Caco-2 (cell line): ENCODE measurements at regions of chr1 and their contacts with region 1.

Region 1: GRCh38 chr1:220384164-220384563 is 111.9 kb upstream of the RAB3GAP2 start:
- DNase-seq: peak in 1 of 2 experiments; percentile 10
- H3K4me3 ChIP-seq: no peak overlapping the region
- H3K4me3 Mint-ChIP-seq: no peak overlapping the region
- H3K27ac Mint-ChIP-seq: no peak overlapping the region
- H3K4me1 ChIP-seq: peaks cover 5% of the 10 kb centered on the region; the same call in 1 of the 2 replicates
- H3K4me1 Mint-ChIP-seq: peaks cover 9% of the 10 kb centered on the region
- H3K27me3 ChIP-seq: 0 out of 2 replicates have a peak, but pooled peaks cover 1% of the 10 kb centered on the region
- H3K27me3 Mint-ChIP-seq: peaks cover 42% of the 10 kb centered on the region
- CTCF ChIP-seq: no peak

Region 2: DNA sequence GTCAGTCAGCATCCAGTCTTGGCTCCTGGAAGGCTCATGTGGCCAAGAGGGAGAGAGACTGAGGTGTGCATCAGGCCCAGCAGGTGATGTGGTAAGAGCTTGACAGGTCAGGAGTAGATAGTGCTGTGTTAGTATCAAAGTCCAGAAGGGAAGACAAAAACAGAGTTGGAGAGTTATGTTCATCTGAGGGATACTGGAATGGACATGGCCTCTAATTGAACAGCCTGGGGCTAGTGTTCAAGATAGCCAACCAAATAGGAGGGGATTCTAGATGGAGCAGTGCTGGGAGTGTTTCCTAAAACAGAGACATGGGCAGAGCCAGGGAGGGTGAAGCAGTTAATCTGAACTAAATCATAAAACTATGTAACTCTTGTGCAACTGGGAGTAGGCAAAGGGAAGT is 23.0 kb after region 1 on chr1:
- CTCF ChIA-PET with region 1: no interaction called
- POLR2A ChIA-PET with region 1: no interaction called
- intact Hi-C with region 1: loop called (anchors 2 kb)
- DNase-seq: peak; percentile 50 to 51
- H3K4me3 ChIP-seq: no peak overlapping the region
- H3K4me3 Mint-ChIP-seq: no peak overlapping the region
- H3K27ac Mint-ChIP-seq: no peak overlapping the region
- H3K4me1 ChIP-seq: peaks cover 17% of the 10 kb centered on the region; the same call in 1 of the 2 replicates
- H3K4me1 Mint-ChIP-seq: peaks cover 20% of the 10 kb centered on the region
- H3K27me3 ChIP-seq: no peaks in the 10 kb centered on the region
- H3K27me3 Mint-ChIP-seq: no peaks in the 10 kb centered on the region
- CTCF ChIP-seq: no peak

Region 3: GRCh38 chr1:220454155-220454777 is 70.1 kb after region 1 on chr1:
- CTCF ChIA-PET with region 1: no interaction called
- POLR2A ChIA-PET with region 1: no interaction called
- intact Hi-C with region 1: no loop called
- DNase-seq: no peak
- H3K4me3 ChIP-seq: no peak overlapping the region
- H3K4me3 Mint-ChIP-seq: no peak overlapping the region
- H3K27ac Mint-ChIP-seq: no peak overlapping the region
- H3K4me1 ChIP-seq: peaks cover 32% of the 10 kb centered on the region
- H3K4me1 Mint-ChIP-seq: peaks cover 24% of the 10 kb centered on the region
- H3K27me3 ChIP-seq: no peaks in the 10 kb centered on the region
- H3K27me3 Mint-ChIP-seq: no peaks in the 10 kb centered on the region
- CTCF ChIP-seq: peak in 1 of 2 experiments; percentile 36

Region 4: DNA sequence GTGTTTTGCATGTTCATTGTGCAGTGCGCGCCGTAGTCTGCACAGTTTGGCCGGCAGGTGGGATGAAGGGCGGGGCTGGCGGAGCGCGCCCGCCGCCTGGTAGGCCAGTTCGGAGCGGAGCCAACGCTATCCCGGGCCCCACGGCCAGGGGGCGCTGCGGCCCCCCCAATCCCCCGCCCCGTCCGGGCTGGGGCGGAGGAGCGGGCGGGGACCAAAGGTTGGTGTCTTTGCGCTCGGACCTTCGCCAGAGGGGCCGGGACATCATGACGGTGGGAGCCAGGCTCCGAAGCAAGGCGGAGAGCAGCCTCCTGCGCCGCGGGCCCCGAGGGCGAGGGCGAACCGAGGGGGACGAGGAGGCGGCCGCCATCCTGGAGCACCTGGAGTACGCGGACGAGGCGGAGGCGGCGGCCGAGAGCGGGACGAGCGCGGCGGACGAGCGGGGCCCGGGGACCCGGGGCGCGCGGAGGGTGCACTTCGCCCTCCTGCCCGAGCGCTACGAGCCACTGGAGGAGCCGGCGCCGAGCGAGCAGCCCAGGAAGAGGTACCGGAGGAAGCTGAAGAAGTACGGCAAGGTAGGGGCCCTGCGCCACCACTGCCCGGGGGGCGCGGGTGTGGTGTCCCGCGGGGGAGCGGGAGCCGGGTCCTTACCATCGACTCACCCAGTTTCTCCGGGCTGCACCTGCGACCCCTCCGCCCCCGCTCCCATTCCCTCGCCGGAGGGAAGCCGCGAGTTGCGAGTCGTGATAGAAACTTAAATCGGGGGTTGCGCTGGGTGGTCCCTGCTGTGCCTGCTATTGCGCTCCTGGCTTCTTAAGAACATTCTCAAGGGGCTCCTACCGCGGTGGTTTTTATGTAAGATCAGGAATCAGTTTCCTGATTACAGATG is 306.2 kb after region 1 on chr1 and contains the start of gene C1orf115:
- CTCF ChIA-PET with region 1: no interaction called
- POLR2A ChIA-PET with region 1: no interaction called
- intact Hi-C with region 1: no loop called
- DNase-seq: peak; percentile 80 to 95
- H3K4me3 ChIP-seq: peak within 1 kb of the TSS; percentile 94
- H3K4me3 Mint-ChIP-seq: peak within 1 kb of the TSS; percentile 94
- H3K27ac Mint-ChIP-seq: peak within 1 kb of the TSS; percentile 82
- H3K4me1 ChIP-seq: peaks cover 8% of the 10 kb centered on the region; the same call in 1 of the 2 replicates
- H3K4me1 Mint-ChIP-seq: no peaks in the 10 kb centered on the region
- H3K27me3 ChIP-seq: no peaks in the 10 kb centered on the region
- H3K27me3 Mint-ChIP-seq: no peaks in the 10 kb centered on the region
- CTCF ChIP-seq: peak; percentile 95 to 98
- total RNA-seq, gene C1orf115: 26.5 and 33.9 TPM in 2 replicates

Region 5: DNA sequence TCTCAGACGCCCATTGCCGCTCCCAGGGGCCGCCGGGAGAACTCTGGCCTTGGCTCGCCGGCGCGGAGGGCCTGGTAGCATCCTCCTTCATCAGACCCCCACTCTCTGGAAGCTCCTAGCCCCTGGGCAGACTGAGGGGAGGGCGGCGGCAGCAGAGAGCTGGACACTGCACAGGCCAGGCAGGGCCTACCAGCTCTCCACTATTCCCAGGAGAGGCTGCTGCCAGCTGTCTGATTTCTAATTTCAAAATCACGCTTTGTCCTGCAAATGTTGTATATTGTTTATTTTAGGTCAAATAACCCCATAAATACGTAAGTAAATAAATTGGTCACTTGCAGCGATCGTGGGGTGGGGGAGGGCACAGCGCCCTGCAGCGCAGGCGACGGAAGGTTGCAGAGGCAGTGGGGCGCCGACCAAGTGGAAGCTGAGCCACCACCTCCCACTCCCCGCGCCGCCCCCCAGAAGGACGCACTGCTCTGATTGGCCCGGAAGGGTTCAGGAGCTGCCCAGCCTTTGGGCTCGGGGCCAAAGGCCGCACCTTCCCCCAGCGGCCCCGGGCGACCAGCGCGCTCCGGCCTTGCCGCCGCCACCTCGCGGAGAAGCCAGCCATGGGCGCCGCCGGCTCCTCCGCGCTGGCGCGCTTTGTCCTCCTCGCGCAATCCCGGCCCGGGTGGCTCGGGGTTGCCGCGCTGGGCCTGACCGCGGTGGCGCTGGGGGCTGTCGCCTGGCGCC is 402.3 kb after region 1 on chr1 and contains the start of gene MTARC1:
- CTCF ChIA-PET with region 1: no interaction called
- POLR2A ChIA-PET with region 1: no interaction called
- intact Hi-C with region 1: loop called (anchors 2 kb)
- DNase-seq: peak; percentile 90 to 91
- H3K4me3 ChIP-seq: peak within 1 kb of the TSS; percentile 55
- H3K4me3 Mint-ChIP-seq: peak within 1 kb of the TSS; percentile 85
- H3K27ac Mint-ChIP-seq: peak within 1 kb of the TSS; percentile 81
- H3K4me1 ChIP-seq: peaks cover 33% of the 10 kb centered on the region
- H3K4me1 Mint-ChIP-seq: peaks cover 28% of the 10 kb centered on the region
- H3K27me3 ChIP-seq: no peaks in the 10 kb centered on the region
- H3K27me3 Mint-ChIP-seq: no peaks in the 10 kb centered on the region
- CTCF ChIP-seq: no peak
- total RNA-seq, gene MTARC1: 88.7 and 93.0 TPM in 2 replicates